GM12878 (cell line): ENCODE measurements at regions of chr7 and their contacts with region 1.

Region 1: DNA sequence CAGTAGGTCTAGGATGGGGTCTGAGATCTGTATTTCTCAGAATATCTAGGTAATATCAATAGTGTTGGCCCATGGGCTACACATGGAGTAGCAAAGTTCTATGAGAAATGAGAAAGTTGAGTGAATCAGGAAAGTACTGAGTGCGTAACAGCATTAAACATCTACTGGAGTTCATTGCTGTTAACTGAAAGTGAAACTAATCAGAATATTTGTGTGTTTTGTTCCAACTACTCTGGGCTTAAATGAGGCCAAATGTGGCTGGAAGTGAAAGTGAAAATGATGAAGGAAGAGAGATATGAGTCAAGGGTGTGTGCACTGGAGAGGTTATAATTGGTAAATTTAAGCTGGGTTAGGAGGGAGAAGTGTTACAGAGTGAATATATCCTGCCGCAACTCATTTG is 46.5 kb downstream of the TMEM106B start:
- DNase-seq: peak; percentile 86
- ATAC-seq: peak; percentile 100
- H3K4me3 ChIP-seq: no peak overlapping the region
- H3K27ac ChIP-seq: no peak overlapping the region
- H3K4me1 ChIP-seq: peaks cover 10% of the 10 kb centered on the region
- H3K27me3 ChIP-seq: no peaks in the 10 kb centered on the region; a peak in 1 of 4 replicates
- CTCF ChIP-seq: no peak
- EP300 ChIP-seq: peak; percentile 52 to 97; a peak in 3 of 4 replicates
- POLR2A ChIP-seq: no peak
- RAD21 ChIP-seq: no peak

Region 2: DNA sequence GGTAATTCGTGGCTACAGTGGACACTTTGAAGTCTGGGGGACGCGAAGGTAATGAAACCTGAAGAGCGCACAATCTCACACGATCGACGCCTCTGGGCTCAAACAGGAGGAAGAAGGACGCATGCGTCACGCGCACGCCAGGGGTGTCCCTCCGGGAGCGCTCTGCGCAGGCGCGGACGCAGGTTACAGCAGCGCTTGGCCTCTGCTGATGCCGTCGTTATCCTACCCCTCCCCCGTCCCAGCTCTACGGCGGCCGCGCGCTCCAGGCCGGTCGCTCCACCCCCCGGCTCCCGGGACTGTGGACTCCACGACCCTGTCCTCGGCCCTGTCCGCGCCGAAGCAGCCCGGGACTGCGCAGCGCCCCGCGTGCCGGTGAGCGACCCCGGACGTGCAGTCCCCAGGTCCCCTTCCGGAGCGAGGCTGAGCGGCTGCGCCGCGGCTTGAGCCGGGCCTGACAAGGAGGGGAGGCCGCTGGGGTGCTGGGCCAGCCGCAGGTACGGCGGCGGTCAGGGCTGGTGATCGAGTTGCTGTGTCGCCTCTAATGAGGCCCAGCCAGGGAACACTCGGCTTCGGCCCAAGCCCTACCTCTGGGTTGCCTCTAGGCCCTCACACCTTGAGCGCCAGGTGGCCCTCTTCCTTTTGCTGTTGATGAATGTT is 46.4 kb before region 1 on chr7 and contains the start of gene TMEM106B:
- CTCF ChIA-PET with region 1: no interaction called
- POLR2A ChIA-PET with region 1: interaction called, 11 read pairs
- RAD21 ChIA-PET with region 1: no interaction called
- SMC1A ChIA-PET with region 1: interaction called, 10 read pairs
- in situ Hi-C with region 1: no loop called
- intact Hi-C with region 1: loop called (anchors 1 kb)
- DNase-seq: peak; percentile 82
- ATAC-seq: peak; percentile 95
- H3K4me3 ChIP-seq: peak within 1 kb of the TSS; percentile 70
- H3K27ac ChIP-seq: peak within 1 kb of the TSS; percentile 71
- H3K4me1 ChIP-seq: peaks cover 4% of the 10 kb centered on the region
- H3K27me3 ChIP-seq: peaks cover 0 to 5% of the 10 kb centered on the region in 2 experiments; a peak in 1 of 4 replicates
- CTCF ChIP-seq: peak in 2 of 3 experiments; percentile 33 to 35; a peak in 3 of 6 replicates
- EP300 ChIP-seq: no peak
- POLR2A ChIP-seq: peak; percentile 94
- RAD21 ChIP-seq: peak; percentile 42; the same call in 1 of the 2 replicates
- polyA plus RNA-seq, gene TMEM106B: 3.7 to 5.4 TPM

Region 3: DNA sequence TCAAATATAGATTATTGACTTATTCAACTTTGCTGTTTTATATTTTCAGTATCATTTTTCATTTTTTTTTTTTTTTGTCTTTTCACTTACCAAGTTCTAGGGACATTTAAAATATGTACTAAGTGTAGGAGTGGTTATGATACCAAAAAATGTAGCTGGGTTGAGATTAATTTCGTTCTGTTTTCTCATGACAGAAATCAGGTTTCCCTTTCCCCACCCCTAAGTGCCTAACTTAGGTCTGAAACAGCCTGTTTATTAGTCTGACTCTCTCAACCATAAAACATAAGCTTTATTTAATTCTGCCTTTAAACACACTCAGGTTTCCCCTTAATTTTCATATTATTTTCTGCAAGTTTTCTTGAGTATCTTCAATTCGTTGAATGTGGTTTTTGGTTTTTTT is 24.4 kb before region 1 on chr7:
- CTCF ChIA-PET with region 1: no interaction called
- POLR2A ChIA-PET with region 1: no interaction called
- RAD21 ChIA-PET with region 1: no interaction called
- SMC1A ChIA-PET with region 1: no interaction called
- in situ Hi-C with region 1: no loop called
- intact Hi-C with region 1: no loop called
- DNase-seq: no peak
- ATAC-seq: peak; percentile 31; the same call in 2 of the 3 replicates
- H3K4me3 ChIP-seq: no peak overlapping the region
- H3K27ac ChIP-seq: no peak overlapping the region
- H3K4me1 ChIP-seq: no peaks in the 10 kb centered on the region
- H3K27me3 ChIP-seq: no peaks in the 10 kb centered on the region
- CTCF ChIP-seq: no peak
- EP300 ChIP-seq: no peak
- POLR2A ChIP-seq: no peak
- RAD21 ChIP-seq: no peak

Region 4: DNA sequence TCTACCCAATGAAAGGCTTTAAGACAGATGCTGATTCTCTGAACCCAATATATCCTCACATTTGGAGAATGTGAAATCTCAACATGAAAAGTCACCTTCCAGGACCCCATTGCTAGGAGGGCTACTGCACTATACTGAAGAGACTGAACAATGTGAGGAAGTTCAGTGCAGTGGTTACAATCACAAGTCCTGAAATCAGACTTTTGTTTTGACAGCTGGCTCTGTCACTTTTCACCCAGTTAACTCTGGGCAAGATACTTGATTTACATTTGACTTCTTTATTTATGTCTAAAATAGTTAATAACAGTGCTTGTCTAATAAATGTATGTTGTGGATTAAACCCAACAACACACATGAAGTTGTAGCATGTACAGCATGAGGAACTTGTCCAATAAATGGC is 160.9 kb after region 1 on chr7:
- CTCF ChIA-PET with region 1: no interaction called
- POLR2A ChIA-PET with region 1: no interaction called
- RAD21 ChIA-PET with region 1: no interaction called
- SMC1A ChIA-PET with region 1: no interaction called
- in situ Hi-C with region 1: no loop called
- intact Hi-C with region 1: no loop called
- DNase-seq: no peak
- ATAC-seq: no peak
- H3K4me3 ChIP-seq: no peak overlapping the region
- H3K27ac ChIP-seq: no peak overlapping the region
- H3K4me1 ChIP-seq: no peaks in the 10 kb centered on the region
- H3K27me3 ChIP-seq: no peaks in the 10 kb centered on the region
- CTCF ChIP-seq: no peak
- EP300 ChIP-seq: no peak
- POLR2A ChIP-seq: no peak
- RAD21 ChIP-seq: no peak